ENCODE measurements at regions of chr7 and their contacts with region 1.

Region 1: DNA sequence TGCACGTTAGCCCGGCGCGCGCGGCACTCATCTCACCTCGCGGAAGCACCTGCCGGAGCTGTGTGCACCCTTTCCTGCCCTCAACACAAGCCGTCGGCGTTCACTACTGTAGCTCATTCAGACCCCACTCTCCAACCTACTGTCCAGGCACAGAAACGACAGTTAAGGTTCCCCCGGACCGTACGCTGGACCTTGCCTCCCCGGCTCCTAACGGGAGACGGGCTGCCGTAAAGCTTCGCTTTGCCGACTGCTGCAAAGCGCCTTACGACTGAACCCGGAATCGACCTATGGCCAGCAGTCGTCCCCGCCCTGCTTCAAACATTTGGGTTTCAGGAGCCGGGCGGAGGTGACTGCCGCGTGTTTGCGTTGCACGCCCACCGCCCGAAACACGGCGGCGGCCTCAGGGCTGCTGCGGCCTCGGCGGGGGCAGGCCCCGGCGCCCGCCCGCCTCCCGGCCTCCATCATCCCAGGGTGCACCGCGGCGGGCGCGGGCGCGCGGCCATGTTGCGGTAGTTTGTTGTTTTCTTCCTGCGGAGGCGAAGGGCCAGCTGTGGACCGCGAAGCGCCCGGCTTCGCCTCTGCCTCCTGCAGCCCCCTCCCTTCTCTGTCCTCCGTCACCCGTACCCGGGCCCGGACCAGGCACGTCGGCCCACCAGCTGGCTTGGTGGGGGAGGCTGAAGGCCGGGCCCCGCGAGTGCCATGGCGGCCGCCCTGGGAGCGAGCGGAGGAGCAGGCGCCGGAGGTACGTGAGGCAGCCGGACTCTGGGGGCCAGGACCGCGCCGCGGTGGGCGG is at the start of gene RBM33:
- DNase-seq: peak; percentile 67
- ATAC-seq: peak; percentile 95
- H3K4me3 ChIP-seq: peak within 1 kb of the TSS; percentile 87 to 99
- H3K27ac ChIP-seq: peak within 1 kb of the TSS; percentile 96
- H3K4me1 ChIP-seq: peaks cover 11% of the 10 kb centered on the region; the same call in 1 of the 2 replicates
- H3K27me3 ChIP-seq: no peaks in the 10 kb centered on the region
- CTCF ChIP-seq: no peak
- total RNA-seq, gene RBM33: 61.1 TPM

Region 2: GRCh38 chr7:155584763-155585531 is 59.4 kb before region 1 on chr7:
- CTCF ChIA-PET with region 1: no interaction called
- POLR2A ChIA-PET with region 1: no interaction called
- in situ Hi-C with region 1: loop called (anchors 5 kb)
- intact Hi-C with region 1: no loop called
- DNase-seq: no peak
- ATAC-seq: 0 out of 2 replicates have a peak, but pooled peaks have one; percentile 33
- H3K4me3 ChIP-seq: no peak overlapping the region
- H3K27ac ChIP-seq: no peak overlapping the region
- H3K4me1 ChIP-seq: no peaks in the 10 kb centered on the region
- H3K27me3 ChIP-seq: peaks cover 5% of the 10 kb centered on the region
- CTCF ChIP-seq: no peak

Region 3: GRCh38 chr7:155669717-155670505 is 25.5 kb after region 1 on chr7:
- CTCF ChIA-PET with region 1: no interaction called
- POLR2A ChIA-PET with region 1: no interaction called
- in situ Hi-C with region 1: no loop called
- intact Hi-C with region 1: no loop called
- DNase-seq: no peak
- ATAC-seq: no peak
- H3K4me3 ChIP-seq: no peak overlapping the region
- H3K27ac ChIP-seq: no peak overlapping the region
- H3K4me1 ChIP-seq: peaks cover 17% of the 10 kb centered on the region
- H3K27me3 ChIP-seq: no peaks in the 10 kb centered on the region
- CTCF ChIP-seq: no peak

Region 4: GRCh38 chr7:155702616-155703015 is 58.2 kb after region 1 on chr7:
- CTCF ChIA-PET with region 1: no interaction called
- POLR2A ChIA-PET with region 1: no interaction called
- in situ Hi-C with region 1: no loop called
- intact Hi-C with region 1: no loop called
- DNase-seq: no peak
- ATAC-seq: no peak
- H3K4me3 ChIP-seq: no peak overlapping the region
- H3K27ac ChIP-seq: no peak overlapping the region
- H3K4me1 ChIP-seq: no peaks in the 10 kb centered on the region
- H3K27me3 ChIP-seq: no peaks in the 10 kb centered on the region
- CTCF ChIP-seq: no peak